ENCODE measurements at regions of chr14 and their contacts with region 1.

Region 1: DNA sequence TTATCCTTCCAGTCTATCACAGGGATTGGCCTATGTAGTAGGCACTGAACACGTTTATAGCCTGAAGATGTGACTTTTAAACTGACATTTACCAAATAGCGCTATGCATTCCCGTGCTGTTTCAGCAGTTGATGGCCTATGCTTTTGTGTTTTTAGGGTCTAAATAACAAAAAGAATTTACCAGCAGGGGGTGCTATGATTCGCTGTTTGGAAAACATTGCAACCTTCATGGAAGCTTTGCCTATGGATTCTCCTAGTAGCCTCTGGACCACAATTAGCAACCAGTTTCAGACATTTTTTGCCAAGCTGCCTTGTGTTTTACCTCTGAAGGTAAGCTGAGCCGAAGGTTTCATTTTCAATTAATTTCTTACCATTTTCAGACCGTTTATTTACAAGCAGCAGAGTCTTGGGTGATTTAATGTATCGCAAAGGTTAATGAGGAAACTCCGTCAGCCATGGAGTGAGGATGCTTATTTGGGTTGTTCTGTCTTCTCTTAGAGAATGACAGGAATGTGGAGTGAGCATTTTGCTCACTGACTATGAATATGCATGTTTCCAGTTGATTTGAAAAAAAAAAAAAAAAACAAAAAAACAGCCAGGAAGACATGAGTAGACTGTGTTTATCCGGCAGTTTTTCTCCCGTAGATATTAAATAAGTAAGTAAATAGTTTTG is 133.1 kb downstream of the PRIMA1 start:
- H3K4me3 Mint-ChIP-seq: no peak overlapping the region
- H3K27ac Mint-ChIP-seq: no peak overlapping the region
- H3K4me1 Mint-ChIP-seq: no peaks in the 10 kb centered on the region
- H3K27me3 Mint-ChIP-seq: peaks cover 13% of the 10 kb centered on the region

Region 2: GRCh38 chr14:92922883-92923743 is 732.1 kb before region 1 on chr14 and contains the start of gene CHGA:
- intact Hi-C with region 1: no loop called
- H3K4me3 Mint-ChIP-seq: no peak within 1 kb of the TSS
- H3K27ac Mint-ChIP-seq: no peak within 1 kb of the TSS
- H3K4me1 Mint-ChIP-seq: peaks cover 8% of the 10 kb centered on the region
- H3K27me3 Mint-ChIP-seq: peaks cover 51% of the 10 kb centered on the region

Region 3: DNA sequence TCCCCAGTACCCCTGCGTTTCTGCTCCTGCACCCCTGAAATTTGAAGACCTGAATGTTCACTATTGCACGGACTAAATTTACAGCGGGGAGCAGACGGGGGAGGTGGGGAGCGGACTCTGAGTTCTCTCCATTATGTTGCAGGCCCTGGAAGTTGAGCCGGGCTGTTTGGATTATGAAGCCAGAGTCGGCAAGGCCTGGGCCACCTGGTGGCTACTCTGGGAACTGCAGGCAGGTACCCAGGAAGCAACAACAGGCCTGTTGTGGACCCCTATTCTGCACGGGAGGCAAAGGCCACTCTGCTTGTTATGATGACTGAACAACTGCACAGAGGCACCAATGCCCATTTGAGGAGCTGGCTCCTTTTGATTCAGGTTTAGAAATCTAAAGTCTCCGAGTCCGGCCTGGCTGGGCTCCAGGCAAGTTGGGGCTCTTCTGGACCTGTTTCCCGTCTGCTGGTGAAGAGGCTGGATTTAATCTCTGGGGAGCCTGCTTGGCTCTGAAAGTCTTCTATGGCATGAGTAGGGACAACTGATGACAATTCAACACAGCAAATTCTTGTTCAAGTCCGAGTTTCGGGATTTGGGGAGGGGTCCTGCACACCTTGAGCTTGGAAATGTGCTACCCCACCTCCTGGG is 237.8 kb after region 1 on chr14:
- intact Hi-C with region 1: loop called (anchors 5 kb)
- H3K4me3 Mint-ChIP-seq: no peak overlapping the region
- H3K27ac Mint-ChIP-seq: no peak overlapping the region
- H3K4me1 Mint-ChIP-seq: no peaks in the 10 kb centered on the region
- H3K27me3 Mint-ChIP-seq: peaks cover 20% of the 10 kb centered on the region

Region 4: GRCh38 chr14:93906341-93907329 is 251.4 kb after region 1 on chr14:
- intact Hi-C with region 1: loop called (anchors 1 kb)
- H3K4me3 Mint-ChIP-seq: no peak overlapping the region
- H3K27ac Mint-ChIP-seq: no peak overlapping the region
- H3K4me1 Mint-ChIP-seq: no peaks in the 10 kb centered on the region
- H3K27me3 Mint-ChIP-seq: peaks cover 12% of the 10 kb centered on the region